Activated T-helper 1 cell treated with anti-CD3 and anti-CD28 coated beads, Interleukin-12 subunit alpha, Interleukin-12 subunit beta, Interleukin-2, Interleukin-4 antibody, amounts not matched to agents 30 ng/mL and 10 ng/mL and 1 ng/mL, durations not matched to agents 14 hours and 24 hours and 36 hours (primary cell): ENCODE measurements at regions of chr4 and their contacts with region 1.

Region 1: DNA sequence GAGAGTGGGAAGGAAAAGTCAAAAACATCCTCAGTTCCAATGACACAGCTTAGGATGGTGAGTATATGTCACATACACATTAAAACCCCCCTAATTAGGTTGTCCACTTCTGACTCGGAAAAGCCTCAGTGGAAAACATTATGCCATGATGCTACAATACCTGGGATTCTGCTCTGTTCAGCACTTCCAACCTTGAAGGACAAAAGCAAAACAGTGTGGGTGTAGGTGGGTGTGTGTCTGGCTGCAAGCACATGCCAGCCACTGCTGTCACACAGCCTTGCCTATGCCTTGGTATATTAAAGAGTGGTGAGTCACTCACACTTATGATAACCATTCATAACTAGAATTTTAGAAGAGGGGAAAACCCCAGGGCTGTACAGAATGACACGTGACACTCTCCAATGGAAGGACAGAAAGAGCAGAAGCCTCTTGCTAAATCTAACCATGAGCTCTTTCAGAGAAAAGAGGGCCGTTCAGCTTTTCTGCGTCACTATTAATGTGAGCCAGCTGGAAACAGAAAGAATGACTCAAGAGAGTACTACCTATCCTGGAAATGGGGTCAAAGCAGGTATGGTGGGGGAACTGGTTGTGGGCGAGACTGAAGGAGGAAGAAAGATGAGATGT is 159.6 kb downstream of the TET2 start:
- DNase-seq: peak; percentile 60
- H3K4me3 Mint-ChIP-seq: peak overlapping the region; percentile 41
- H3K27ac Mint-ChIP-seq: peak overlapping the region; percentile 92
- H3K4me1 Mint-ChIP-seq: peaks cover 25% of the 10 kb centered on the region
- H3K27me3 Mint-ChIP-seq: no peaks in the 10 kb centered on the region

Region 2: DNA sequence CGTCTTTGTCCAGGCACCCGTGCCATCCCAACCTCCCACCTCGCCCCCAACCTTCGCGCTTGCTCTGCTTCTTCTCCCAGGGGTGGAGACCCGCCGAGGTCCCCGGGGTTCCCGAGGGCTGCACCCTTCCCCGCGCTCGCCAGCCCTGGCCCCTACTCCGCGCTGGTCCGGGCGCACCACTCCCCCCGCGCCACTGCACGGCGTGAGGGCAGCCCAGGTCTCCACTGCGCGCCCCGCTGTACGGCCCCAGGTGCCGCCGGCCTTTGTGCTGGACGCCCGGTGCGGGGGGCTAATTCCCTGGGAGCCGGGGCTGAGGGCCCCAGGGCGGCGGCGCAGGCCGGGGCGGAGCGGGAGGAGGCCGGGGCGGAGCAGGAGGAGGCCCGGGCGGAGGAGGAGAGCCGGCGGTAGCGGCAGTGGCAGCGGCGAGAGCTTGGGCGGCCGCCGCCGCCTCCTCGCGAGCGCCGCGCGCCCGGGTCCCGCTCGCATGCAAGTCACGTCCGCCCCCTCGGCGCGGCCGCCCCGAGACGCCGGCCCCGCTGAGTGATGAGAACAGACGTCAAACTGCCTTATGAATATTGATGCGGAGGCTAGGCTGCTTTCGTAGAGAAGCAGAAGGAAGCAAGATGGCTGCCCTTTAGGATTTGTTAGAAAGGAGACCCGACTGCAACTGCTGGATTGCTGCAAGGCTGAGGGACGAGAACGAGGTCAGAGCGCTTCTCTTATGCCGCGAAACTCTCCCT is 159.8 kb before region 1 on chr4 and contains the start of gene TET2:
- intact Hi-C with region 1: loop called (anchors 1 kb)
- DNase-seq: peak; percentile 77
- H3K4me3 Mint-ChIP-seq: peak within 1 kb of the TSS; percentile 95
- H3K27ac Mint-ChIP-seq: peak within 1 kb of the TSS; percentile 98
- H3K4me1 Mint-ChIP-seq: peaks cover 50% of the 10 kb centered on the region
- H3K27me3 Mint-ChIP-seq: no peaks in the 10 kb centered on the region
- total RNA-seq, gene TET2: 28.7 and 28.8 TPM in 2 replicates

Region 3: DNA sequence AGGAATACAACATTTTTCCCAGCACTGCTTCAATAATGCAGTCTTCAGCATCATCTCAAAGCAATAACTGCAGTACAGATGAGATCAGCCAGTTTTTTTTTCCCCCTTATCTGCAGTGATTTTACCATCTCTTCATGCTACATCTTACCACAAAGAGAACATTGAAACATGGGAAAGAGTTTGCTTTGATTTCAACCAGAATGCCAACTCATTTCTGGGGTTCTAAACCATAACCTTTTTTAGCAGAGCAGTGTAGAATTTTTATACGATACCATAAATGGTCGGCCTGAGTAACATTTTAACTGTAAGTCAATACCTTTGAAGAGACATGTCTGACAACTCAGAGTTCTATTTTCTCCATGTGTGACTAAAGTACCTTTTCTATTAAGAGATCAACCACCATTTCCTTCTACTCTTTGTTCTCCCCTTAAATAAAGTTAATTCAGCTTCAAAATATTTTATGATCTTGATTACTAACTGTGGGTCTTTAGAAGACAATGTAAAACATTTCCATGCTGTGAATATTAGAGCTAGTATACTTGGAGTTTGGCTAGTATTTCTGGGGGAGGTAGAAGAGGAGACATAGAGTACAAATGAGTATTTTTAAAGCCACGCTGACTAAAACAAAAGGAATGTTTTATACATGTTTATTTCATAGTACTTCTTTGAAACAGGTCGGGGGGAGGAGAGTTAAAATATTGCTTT is 90.5 kb before region 1 on chr4:
- intact Hi-C with region 1: loop called (anchors 1 kb)
- DNase-seq: no peak
- H3K4me3 Mint-ChIP-seq: peak overlapping the region; percentile 23
- H3K27ac Mint-ChIP-seq: peak overlapping the region; percentile 46
- H3K4me1 Mint-ChIP-seq: peaks cover 20% of the 10 kb centered on the region
- H3K27me3 Mint-ChIP-seq: no peaks in the 10 kb centered on the region

Region 4: DNA sequence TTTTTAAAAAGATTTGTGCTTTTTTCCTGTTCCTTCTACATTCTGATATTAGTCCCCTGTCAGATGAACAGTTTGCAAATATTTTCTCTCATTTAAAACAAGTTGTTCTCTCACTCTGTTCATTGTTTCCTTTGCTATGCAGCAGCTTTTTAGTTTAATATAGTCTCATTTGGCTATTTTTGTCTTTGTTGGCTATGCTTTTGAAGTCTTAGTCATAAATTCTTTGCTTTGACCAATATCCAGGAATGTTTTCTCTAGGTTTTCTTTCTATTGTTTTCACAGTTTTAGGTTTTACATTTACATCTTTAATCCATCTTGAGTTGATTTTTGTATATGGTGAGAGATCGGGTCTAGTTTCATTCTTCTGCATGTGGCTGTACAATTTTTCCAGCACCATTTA is 22.8 kb before region 1 on chr4:
- intact Hi-C with region 1: loop called (anchors 1 kb)
- DNase-seq: no peak
- H3K4me3 Mint-ChIP-seq: no peak overlapping the region
- H3K27ac Mint-ChIP-seq: no peak overlapping the region
- H3K4me1 Mint-ChIP-seq: peaks cover 19% of the 10 kb centered on the region
- H3K27me3 Mint-ChIP-seq: no peaks in the 10 kb centered on the region

Region 5: DNA sequence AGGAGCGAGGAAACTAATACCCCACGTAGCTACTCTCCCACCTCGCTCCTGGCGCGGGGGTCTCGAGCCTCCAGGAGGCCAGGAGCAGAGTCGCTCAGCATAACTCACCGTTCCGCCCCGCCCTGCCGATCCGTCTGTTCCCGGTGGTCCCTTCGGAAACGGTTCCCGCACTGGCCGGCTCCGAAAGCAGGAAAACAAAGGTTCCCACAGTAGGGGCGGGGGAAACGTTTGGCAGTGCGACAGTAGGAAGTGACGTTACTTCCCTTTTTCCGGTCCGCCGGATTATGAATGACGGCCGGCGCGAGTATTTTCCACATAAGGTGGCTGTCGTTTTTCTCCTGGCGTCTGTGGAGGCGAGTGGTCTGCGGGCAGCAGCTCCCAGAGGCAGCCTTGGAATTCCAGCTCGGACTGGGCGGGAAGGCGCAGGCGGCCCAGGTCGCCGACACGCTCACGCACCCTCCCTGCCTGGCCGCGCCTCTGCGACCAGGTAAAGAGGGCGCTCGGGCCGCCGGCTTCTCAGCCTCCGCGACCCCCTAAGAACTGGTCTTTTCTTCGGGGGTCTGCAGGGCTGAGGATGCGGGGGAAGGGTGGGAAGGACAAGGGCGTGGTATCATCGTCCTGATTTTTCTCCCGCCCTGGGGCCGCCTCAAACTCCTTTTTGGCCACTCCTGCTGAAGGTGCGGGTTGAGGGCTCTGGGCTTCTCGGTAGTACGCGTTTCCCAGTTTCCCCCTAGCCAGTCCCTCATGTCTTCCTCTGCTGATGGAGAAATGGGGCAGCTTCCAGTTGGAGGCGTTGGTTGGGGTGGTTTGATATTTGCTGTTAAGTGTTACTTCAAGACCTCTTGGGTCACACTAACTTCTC is 402.5 kb after region 1 on chr4 and contains the starts of genes GSTCD and INTS12:
- intact Hi-C with region 1: no loop called
- DNase-seq: peak; percentile 83
- H3K4me3 Mint-ChIP-seq: peak within 1 kb of the TSS; percentile 99
- H3K27ac Mint-ChIP-seq: peak within 1 kb of the TSS; percentile 95
- H3K4me1 Mint-ChIP-seq: peaks cover 21% of the 10 kb centered on the region
- H3K27me3 Mint-ChIP-seq: no peaks in the 10 kb centered on the region
- total RNA-seq, gene GSTCD: 17.0 and 20.9 TPM in 2 replicates
- total RNA-seq, gene INTS12: 18.7 and 22.4 TPM in 2 replicates